Adrenal gland (tissue), 19 donors: ENCODE measurements at regions of chr19 and their contacts with region 1.

Region 1: GRCh38 chr19:38250821-38251563 is 5.2 kb downstream of the PPP1R14A start:
- DNase-seq: peak; percentile 79 to 88 (median 82)
- H3K4me3 ChIP-seq: peak overlapping the region in 1 of 4 donors; percentile 35
- H3K27ac ChIP-seq: peak overlapping the region; percentile 46 to 91 (median 74)
- H3K4me1 ChIP-seq: peaks cover 65 to 71% of the 10 kb centered on the region in 2 donors
- H3K27me3 ChIP-seq: no peaks in the 10 kb centered on the region
- CTCF ChIP-seq: no peak
- POLR2A ChIP-seq: no peak

Region 2: GRCh38 chr19:37966662-37967231 is 284.2 kb before region 1 on chr19:
- intact Hi-C with region 1: no loop called
- DNase-seq: no peak
- H3K4me3 ChIP-seq: no peak overlapping the region
- H3K27ac ChIP-seq: no peak overlapping the region
- H3K4me1 ChIP-seq: no peaks in the 10 kb centered on the region
- H3K27me3 ChIP-seq: no peaks in the 10 kb centered on the region
- CTCF ChIP-seq: no peak
- POLR2A ChIP-seq: no peak

Region 3: DNA sequence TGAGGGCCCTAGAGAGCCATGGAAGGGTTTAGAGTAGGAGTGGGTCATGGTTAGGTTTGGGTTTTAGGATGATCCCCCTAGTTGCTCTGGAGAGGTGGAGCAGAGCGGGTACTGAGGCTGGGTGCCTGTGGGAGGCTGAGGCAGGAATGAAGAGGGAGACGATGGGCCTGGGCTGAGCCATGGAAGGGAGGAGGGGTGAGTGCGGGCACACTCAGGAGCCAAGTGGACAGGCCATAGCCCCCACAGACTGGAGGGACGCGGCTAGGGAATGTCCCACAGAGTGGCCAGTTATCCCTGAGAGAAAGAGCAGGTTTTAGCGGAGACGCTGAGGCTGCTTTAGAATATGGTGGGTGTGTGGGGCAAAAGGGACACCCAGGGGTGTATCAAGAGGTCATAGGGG is 78.7 kb after region 1 on chr19:
- intact Hi-C with region 1: loop called in 1 of 2 experiments (anchors 5 kb)
- DNase-seq: no peak
- H3K4me3 ChIP-seq: no peak overlapping the region
- H3K27ac ChIP-seq: no peak overlapping the region
- H3K4me1 ChIP-seq: no peaks in the 10 kb centered on the region
- H3K27me3 ChIP-seq: no peaks in the 10 kb centered on the region
- CTCF ChIP-seq: no peak
- POLR2A ChIP-seq: no peak